ENCODE measurements at regions of chr2 and their contacts with region 1.

Region 1: DNA sequence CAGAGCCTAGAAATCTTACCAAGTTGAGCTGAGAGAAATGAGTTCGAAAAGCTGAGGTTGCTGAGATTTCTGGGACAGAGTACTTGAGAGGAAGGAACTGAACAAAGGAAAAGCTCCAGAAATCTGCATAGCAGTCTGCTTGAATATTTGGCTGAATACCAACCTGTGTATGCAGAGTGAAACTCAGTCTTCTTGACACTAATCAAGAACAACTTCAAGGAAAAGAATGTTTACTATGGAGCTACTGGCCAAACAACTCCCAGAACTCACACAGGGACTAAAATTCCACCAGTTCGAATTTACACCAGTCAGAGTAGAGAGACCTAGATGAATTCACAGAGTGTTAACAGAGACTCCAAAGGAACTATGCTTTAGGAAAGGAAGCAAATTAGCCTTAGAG is 66.5 kb downstream of the USP37 start:
- DNase-seq: no peak
- H3K4me3 ChIP-seq: no peak overlapping the region
- H3K27ac ChIP-seq: no peak overlapping the region
- H3K4me1 ChIP-seq: no peaks in the 10 kb centered on the region
- H3K27me3 ChIP-seq: no peaks in the 10 kb centered on the region
- CTCF ChIP-seq: no peak
- POLR2A ChIP-seq: no peak

Region 2: DNA sequence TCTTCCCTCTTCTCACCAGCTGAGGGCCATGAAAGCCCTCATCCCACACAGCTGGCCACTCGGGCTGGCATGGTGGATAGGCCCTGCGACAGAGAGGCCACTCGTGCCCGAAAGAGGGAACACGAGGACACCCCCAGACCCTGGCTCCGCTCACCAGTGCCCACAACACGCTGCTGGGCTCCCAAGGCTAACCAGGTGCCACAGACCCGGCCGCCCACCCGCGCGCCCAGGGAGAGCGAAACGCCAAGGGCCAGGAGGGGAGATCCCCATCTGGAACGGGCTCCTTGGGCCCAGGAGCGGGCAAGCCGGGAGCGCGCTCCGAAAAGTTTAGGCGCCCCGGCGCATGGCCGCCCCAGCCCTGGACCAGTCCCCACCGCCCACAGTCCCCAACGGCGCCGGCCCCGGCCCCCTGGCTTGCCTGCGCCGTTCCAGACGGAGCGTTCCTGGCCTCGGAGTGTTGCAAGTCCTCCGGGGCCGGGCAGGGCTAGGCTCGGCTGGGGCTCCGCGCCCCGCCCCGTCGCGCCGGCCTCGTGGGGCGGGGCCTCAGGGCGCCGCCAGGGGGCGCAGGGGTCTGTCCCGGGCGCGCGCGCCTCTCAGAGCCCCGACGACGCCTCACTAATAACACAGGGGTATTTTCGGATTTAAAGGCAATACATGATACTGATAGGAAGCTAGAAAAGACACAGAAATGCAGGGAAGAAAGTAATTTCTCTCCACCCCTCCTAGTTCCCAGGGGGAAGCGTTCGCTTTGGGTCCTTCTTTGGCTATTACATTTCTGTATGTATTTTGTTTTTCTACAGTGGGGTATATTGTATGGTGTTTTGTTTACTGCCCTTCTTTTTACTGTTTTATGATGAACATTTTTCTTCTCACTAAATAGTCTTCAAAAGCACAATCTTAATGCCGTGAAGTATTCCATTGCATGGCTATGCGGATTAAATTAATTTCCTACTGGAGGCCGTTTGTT is 209.3 kb before region 1 on chr2 and contains the start of gene TMBIM1:
- intact Hi-C with region 1: no loop called
- DNase-seq: no peak
- H3K4me3 ChIP-seq: peak within 1 kb of the TSS; percentile 75 to 79
- H3K27ac ChIP-seq: peak within 1 kb of the TSS; percentile 94 to 96
- H3K4me1 ChIP-seq: peaks cover 33% of the 10 kb centered on the region
- H3K27me3 ChIP-seq: no peaks in the 10 kb centered on the region
- CTCF ChIP-seq: peak; percentile 89 to 97 (median 92)
- POLR2A ChIP-seq: peak; percentile 91
- total RNA-seq, gene TMBIM1: 139 to 193 TPM

Region 3: GRCh38 chr2:218466016-218466521 is 35.6 kb before region 1 on chr2:
- intact Hi-C with region 1: no loop called
- DNase-seq: no peak
- H3K4me3 ChIP-seq: no peak overlapping the region
- H3K27ac ChIP-seq: no peak overlapping the region
- H3K4me1 ChIP-seq: no peaks in the 10 kb centered on the region
- H3K27me3 ChIP-seq: no peaks in the 10 kb centered on the region
- CTCF ChIP-seq: peak in 3 of 4 experiments; percentile 42 to 60 (median 55)
- POLR2A ChIP-seq: no peak

Region 4: DNA sequence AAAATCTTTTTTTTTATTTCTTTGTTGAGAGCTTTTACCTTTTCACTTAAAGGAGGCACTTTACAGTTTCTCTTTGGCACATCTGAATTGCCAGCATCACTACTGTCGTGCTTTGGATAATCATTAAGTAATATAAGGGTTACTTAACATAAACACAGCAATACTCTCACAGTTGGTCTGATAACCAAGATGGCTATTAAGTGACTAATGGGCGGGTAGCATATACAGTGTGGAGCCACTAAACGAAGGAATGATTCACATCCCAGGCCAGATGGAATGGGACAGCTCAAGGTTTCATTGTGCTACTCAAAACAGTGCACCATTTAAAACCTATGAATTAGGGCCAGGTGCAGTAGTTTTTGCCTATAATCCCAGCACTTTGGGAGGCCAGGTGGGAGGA is 38.4 kb after region 1 on chr2:
- intact Hi-C with region 1: loop called (anchors 10 kb)
- DNase-seq: no peak
- H3K4me3 ChIP-seq: no peak overlapping the region
- H3K27ac ChIP-seq: no peak overlapping the region
- H3K4me1 ChIP-seq: no peaks in the 10 kb centered on the region
- H3K27me3 ChIP-seq: no peaks in the 10 kb centered on the region
- CTCF ChIP-seq: no peak
- POLR2A ChIP-seq: no peak

Measured in prostate gland (tissue), 2 donors.